PC-9 (cell line): ENCODE measurements at regions of chr10 and their contacts with region 1.

Region 1: GRCh38 chr10:17443707-17444387 is 10.5 kb downstream of the ST8SIA6 start:
- DNase-seq: no peak
- H3K4me3 ChIP-seq: no peak overlapping the region
- H3K27ac ChIP-seq: no peak overlapping the region
- H3K4me1 ChIP-seq: peaks cover 20% of the 10 kb centered on the region; the same call in 1 of the 2 replicates
- H3K27me3 ChIP-seq: no peaks in the 10 kb centered on the region
- CTCF ChIP-seq: no peak

Region 2: GRCh38 chr10:17290226-17290625 is 153.6 kb before region 1 on chr10:
- CTCF ChIA-PET with region 1: no interaction called
- POLR2A ChIA-PET with region 1: no interaction called
- intact Hi-C with region 1: no loop called
- DNase-seq: peak; percentile 10 to 37
- H3K4me3 ChIP-seq: no peak overlapping the region
- H3K27ac ChIP-seq: no peak overlapping the region
- H3K4me1 ChIP-seq: no peaks in the 10 kb centered on the region
- H3K27me3 ChIP-seq: no peaks in the 10 kb centered on the region
- CTCF ChIP-seq: peak; percentile 66

Region 3: GRCh38 chr10:17412323-17412722 is 31.5 kb before region 1 on chr10:
- CTCF ChIA-PET with region 1: interaction called, 14 read pairs
- POLR2A ChIA-PET with region 1: no interaction called
- intact Hi-C with region 1: no loop called
- DNase-seq: no peak
- H3K4me3 ChIP-seq: no peak overlapping the region
- H3K27ac ChIP-seq: no peak overlapping the region
- H3K4me1 ChIP-seq: no peaks in the 10 kb centered on the region
- H3K27me3 ChIP-seq: no peaks in the 10 kb centered on the region
- CTCF ChIP-seq: 0 out of 2 replicates have a peak, but pooled peaks have one; percentile 10

Region 4: GRCh38 chr10:17497446-17498030 is 53.7 kb after region 1 on chr10:
- CTCF ChIA-PET with region 1: no interaction called
- POLR2A ChIA-PET with region 1: no interaction called
- intact Hi-C with region 1: no loop called
- DNase-seq: no peak
- H3K4me3 ChIP-seq: no peak overlapping the region
- H3K27ac ChIP-seq: no peak overlapping the region
- H3K4me1 ChIP-seq: no peaks in the 10 kb centered on the region
- H3K27me3 ChIP-seq: no peaks in the 10 kb centered on the region
- CTCF ChIP-seq: no peak

Region 5: DNA sequence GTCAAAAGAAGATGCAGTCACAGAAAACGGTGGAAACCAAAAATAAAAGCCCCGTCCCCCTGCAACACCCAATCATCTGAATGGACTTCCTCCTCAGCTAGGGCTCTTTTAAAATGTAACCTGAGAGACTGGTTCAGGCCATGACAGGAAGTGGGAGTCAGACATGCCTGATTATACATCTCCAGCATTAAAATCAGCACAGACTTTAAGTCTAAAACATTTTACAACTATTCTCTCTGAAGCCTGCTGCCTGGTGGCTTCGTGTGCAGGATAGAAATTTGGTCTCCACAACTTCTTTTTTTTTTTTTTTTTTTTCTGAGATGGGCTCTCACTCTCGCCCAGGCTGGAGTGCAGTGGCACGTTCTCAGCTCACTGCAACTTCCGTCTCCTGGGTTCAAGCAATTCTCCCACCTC is 143.0 kb after region 1 on chr10:
- CTCF ChIA-PET with region 1: no interaction called
- POLR2A ChIA-PET with region 1: interaction called, 8 read pairs
- intact Hi-C with region 1: loop called (anchors 5 kb)
- DNase-seq: no peak
- H3K4me3 ChIP-seq: no peak overlapping the region
- H3K27ac ChIP-seq: no peak overlapping the region
- H3K4me1 ChIP-seq: no peaks in the 10 kb centered on the region
- H3K27me3 ChIP-seq: no peaks in the 10 kb centered on the region
- CTCF ChIP-seq: no peak

Region 6: DNA sequence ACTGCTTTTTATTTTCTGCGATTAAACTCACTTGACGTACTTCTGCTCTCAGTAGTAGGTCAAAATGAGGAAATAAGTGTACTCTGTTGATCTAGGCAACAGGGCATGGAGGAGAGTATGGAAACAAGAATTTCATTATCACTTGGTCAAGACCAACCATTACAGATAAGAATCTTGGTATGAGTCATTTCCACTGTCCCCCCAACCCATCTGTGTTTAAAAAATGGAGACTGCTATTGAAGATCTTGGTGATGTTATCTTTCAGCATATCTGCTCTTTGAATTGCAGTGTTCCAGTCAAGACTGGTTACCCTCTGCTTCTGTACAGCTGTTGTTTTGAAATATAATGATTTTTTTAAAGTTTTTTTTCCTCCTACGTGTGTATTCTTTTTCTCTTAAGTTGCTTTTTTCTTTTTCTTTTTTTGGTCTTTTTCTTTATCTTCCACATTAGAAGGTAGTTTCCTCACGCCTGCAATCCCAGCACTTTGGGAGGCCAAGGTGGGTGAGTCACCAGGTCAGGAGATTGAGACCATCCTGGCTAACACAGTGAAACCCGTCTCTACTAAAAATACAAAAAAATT is 211.8 kb after region 1 on chr10:
- CTCF ChIA-PET with region 1: no interaction called
- POLR2A ChIA-PET with region 1: no interaction called
- intact Hi-C with region 1: no loop called
- DNase-seq: peak; percentile 30 to 87
- H3K4me3 ChIP-seq: peak overlapping the region; percentile 24
- H3K27ac ChIP-seq: peak overlapping the region; percentile 85
- H3K4me1 ChIP-seq: peaks cover 39% of the 10 kb centered on the region
- H3K27me3 ChIP-seq: no peaks in the 10 kb centered on the region
- CTCF ChIP-seq: no peak